Breast epithelium (tissue), 4 donors: ENCODE measurements at regions of chr2 and their contacts with region 1.

Region 1: GRCh38 chr2:152632736-152633135 is 84.5 kb downstream of the PRPF40A start:
- DNase-seq: no peak
- H3K4me3 ChIP-seq: no peak overlapping the region
- H3K27ac ChIP-seq: no peak overlapping the region
- H3K4me1 ChIP-seq: no peaks in the 10 kb centered on the region
- H3K27me3 ChIP-seq: no peaks in the 10 kb centered on the region
- CTCF ChIP-seq: no peak
- POLR2A ChIP-seq: no peak

Region 2: GRCh38 chr2:152573168-152573567 is 59.6 kb before region 1 on chr2:
- intact Hi-C with region 1: loop called (anchors 2 kb)
- DNase-seq: no peak
- H3K4me3 ChIP-seq: no peak overlapping the region
- H3K27ac ChIP-seq: no peak overlapping the region
- H3K4me1 ChIP-seq: no peaks in the 10 kb centered on the region
- H3K27me3 ChIP-seq: no peaks in the 10 kb centered on the region
- CTCF ChIP-seq: no peak
- POLR2A ChIP-seq: no peak

Region 3: DNA sequence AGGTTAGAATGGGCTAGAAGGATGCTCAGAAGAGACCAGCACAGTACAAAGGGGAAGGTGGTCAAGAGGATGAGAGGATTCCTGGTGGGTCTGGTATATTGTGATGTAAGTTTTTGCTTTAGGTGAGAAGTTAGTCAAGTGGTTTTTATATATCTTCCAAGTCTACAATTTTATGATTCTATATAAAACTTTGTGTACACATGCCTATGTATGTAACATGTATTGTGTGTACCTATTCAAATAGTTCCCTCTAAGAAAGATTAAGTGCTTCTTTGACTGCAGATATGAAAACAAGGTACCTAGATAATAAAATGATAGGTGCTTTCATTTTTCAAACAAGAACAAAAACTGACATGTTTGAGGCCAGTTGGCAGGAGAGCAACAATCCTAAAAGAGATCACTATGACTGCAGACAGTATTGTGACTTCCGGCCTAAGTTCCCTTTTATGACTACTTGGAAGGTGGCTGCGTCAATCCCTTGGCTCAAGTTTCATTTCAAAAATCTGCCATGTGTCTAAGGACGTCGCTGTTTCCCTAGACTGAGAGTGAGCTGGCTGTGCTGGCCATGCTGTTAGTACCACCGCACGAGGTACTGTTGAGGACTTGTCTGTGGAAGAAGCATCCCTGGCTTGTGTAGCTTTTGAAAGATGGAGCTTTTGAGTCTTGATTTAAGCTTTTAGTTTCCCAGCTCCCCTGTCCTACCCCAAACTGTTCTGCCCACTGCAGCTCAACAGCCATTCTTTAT is 38.5 kb before region 1 on chr2:
- intact Hi-C with region 1: no loop called
- DNase-seq: no peak
- H3K4me3 ChIP-seq: no peak overlapping the region
- H3K27ac ChIP-seq: peak overlapping the region; percentile 15 to 66
- H3K4me1 ChIP-seq: no peaks in the 10 kb centered on the region
- H3K27me3 ChIP-seq: no peaks in the 10 kb centered on the region
- CTCF ChIP-seq: no peak
- POLR2A ChIP-seq: no peak

Region 4: GRCh38 chr2:152648336-152648735 is 15.6 kb after region 1 on chr2:
- intact Hi-C with region 1: no loop called
- DNase-seq: no peak
- H3K4me3 ChIP-seq: no peak overlapping the region
- H3K27ac ChIP-seq: peak overlapping the region in 1 of 2 donors; percentile 45
- H3K4me1 ChIP-seq: peaks cover 0 to 10% of the 10 kb centered on the region in 2 donors
- H3K27me3 ChIP-seq: no peaks in the 10 kb centered on the region
- CTCF ChIP-seq: no peak
- POLR2A ChIP-seq: no peak